PC-9 (cell line): ENCODE measurements at regions of chr14 and their contacts with region 1.

Region 1: DNA sequence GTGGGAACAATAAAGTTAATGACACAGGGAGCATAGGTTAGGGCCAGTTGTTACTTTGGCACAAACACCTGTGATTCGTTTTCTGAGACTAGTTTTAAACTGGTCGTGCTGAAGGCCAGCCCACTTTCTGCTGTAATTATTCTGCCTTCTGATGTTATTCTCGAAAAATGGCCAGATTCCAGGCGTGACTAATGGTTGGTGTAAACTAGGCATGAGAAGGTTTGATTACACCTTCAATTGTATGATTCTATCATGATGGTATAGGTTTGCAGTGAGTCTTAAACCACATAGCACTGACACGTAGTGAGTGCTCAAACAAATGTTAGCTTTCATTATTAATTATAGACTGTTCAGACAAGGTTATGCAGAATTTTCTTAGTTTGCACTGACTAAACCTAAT is 39.0 kb downstream of the CKB start:
- DNase-seq: peak; percentile 45 to 58
- H3K4me3 ChIP-seq: no peak overlapping the region
- H3K27ac ChIP-seq: peak overlapping the region; percentile 25; the same call in 1 of the 2 replicates
- H3K4me1 ChIP-seq: no peaks in the 10 kb centered on the region
- H3K27me3 ChIP-seq: no peaks in the 10 kb centered on the region
- CTCF ChIP-seq: no peak

Region 2: GRCh38 chr14:101917413-101918017 is 1566.1 kb before region 1 on chr14:
- CTCF ChIA-PET with region 1: interaction called, 11 read pairs
- POLR2A ChIA-PET with region 1: no interaction called
- intact Hi-C with region 1: no loop called
- DNase-seq: no peak
- H3K4me3 ChIP-seq: no peak overlapping the region
- H3K27ac ChIP-seq: no peak overlapping the region
- H3K4me1 ChIP-seq: no peaks in the 10 kb centered on the region
- H3K27me3 ChIP-seq: no peaks in the 10 kb centered on the region
- CTCF ChIP-seq: no peak

Region 3: GRCh38 chr14:103319422-103319821 is 164.2 kb before region 1 on chr14:
- CTCF ChIA-PET with region 1: no interaction called
- POLR2A ChIA-PET with region 1: interaction called, 13 read pairs
- intact Hi-C with region 1: no loop called
- DNase-seq: no peak
- H3K4me3 ChIP-seq: no peak overlapping the region
- H3K27ac ChIP-seq: no peak overlapping the region
- H3K4me1 ChIP-seq: no peaks in the 10 kb centered on the region
- H3K27me3 ChIP-seq: no peaks in the 10 kb centered on the region
- CTCF ChIP-seq: no peak

Region 4: GRCh38 chr14:103418481-103418818 is 65.2 kb before region 1 on chr14:
- CTCF ChIA-PET with region 1: interaction called, 16 read pairs
- POLR2A ChIA-PET with region 1: no interaction called
- intact Hi-C with region 1: no loop called
- DNase-seq: no peak
- H3K4me3 ChIP-seq: no peak overlapping the region
- H3K27ac ChIP-seq: peak overlapping the region; percentile 7
- H3K4me1 ChIP-seq: peaks cover 36% of the 10 kb centered on the region
- H3K27me3 ChIP-seq: no peaks in the 10 kb centered on the region
- CTCF ChIP-seq: no peak

Region 5: DNA sequence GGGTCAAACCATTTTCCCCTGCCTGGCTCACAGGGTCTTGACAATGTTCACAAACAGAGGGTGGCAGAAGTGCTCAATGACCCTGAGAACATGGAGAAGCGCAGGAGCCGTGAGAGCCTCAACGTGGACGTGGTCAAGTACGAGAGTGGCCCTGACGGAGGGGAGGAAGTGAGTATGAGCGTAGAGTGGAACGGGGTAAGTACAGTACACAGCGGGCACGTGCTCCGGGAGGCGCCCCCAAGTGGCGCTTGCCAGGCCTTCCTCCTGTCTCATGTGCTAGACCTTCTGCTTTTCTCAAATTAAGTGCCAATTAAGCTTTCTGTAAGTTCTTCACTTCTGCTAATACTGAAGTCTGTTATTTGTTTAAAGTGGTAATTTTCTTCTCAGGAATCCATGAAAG is 195.8 kb after region 1 on chr14:
- CTCF ChIA-PET with region 1: interaction called, 24 read pairs
- POLR2A ChIA-PET with region 1: no interaction called
- intact Hi-C with region 1: no loop called
- DNase-seq: no peak
- H3K4me3 ChIP-seq: no peak overlapping the region
- H3K27ac ChIP-seq: no peak overlapping the region
- H3K4me1 ChIP-seq: no peaks in the 10 kb centered on the region
- H3K27me3 ChIP-seq: no peaks in the 10 kb centered on the region
- CTCF ChIP-seq: peak; percentile 72